Endothelial cell of umbilical vein (primary cell): ENCODE measurements at regions of chr2 and their contacts with region 1.

Region 1: GRCh38 chr2:62884514-62884913 is 166.1 kb upstream of the OTX1 start:
- DNase-seq: peak; percentile 59
- H3K4me3 ChIP-seq: no peak overlapping the region
- H3K27ac ChIP-seq: no peak overlapping the region
- H3K4me1 ChIP-seq: peaks cover 14% of the 10 kb centered on the region
- H3K27me3 ChIP-seq: no peaks in the 10 kb centered on the region
- CTCF ChIP-seq: no peak
- POLR2A ChIP-seq: peak; percentile 38

Region 2: DNA sequence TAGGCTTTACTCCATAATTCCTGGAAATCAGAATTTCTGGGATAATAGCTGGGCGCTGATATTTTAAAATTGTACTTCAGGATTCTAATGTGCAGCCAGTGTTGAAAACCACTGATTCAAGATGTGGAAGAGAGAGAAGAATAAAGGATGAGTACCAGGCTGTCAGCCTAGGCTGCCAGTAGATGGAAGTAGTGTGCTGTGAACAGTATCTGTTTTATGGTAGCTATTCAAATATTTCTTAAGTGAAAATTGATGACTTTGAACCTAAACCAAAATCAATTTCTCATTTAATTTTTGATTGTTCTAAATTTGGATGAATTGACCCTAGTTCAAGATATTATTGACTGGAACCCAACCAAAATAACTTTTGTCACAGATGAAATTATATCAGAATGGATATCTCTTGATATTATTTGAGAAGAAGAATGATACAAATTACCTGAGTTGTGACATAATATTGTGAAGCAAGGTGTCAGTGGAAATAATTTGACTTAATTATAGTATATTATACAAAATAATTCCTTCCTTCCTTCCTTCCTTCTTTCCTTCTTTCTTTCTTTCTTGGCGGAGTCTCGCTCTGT is 891.0 kb before region 1 on chr2:
- CTCF ChIA-PET with region 1: no interaction called
- POLR2A ChIA-PET with region 1: no interaction called
- dilution Hi-C with region 1: no loop called
- intact Hi-C with region 1: no loop called
- DNase-seq: peak; percentile 72
- H3K4me3 ChIP-seq: no peak overlapping the region
- H3K27ac ChIP-seq: no peak overlapping the region
- H3K4me1 ChIP-seq: no peaks in the 10 kb centered on the region
- H3K27me3 ChIP-seq: no peaks in the 10 kb centered on the region
- CTCF ChIP-seq: peak; percentile 50 to 59
- POLR2A ChIP-seq: no peak

Region 3: DNA sequence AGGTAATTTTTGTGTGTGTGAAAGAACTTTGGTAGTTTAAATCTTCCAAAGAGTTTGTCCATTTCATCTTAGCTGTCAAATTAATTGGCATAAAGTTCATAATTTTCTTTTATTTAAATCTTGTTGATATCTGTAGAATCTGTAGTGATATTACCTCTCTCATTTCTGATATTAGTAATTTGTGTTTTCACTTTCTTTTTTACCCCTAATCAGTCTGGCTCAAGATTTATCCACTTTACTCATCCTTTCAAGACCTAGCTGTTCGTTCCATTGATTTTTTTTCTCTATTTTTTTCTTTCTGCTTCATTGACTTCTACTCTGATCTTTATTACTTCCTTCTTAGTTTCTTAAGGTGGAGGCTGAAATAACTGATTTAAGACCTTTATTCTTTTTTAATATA is 23.6 kb after region 1 on chr2:
- CTCF ChIA-PET with region 1: no interaction called
- POLR2A ChIA-PET with region 1: no interaction called
- dilution Hi-C with region 1: no loop called
- intact Hi-C with region 1: no loop called
- DNase-seq: no peak
- H3K4me3 ChIP-seq: no peak overlapping the region
- H3K27ac ChIP-seq: no peak overlapping the region
- H3K4me1 ChIP-seq: no peaks in the 10 kb centered on the region
- H3K27me3 ChIP-seq: no peaks in the 10 kb centered on the region
- CTCF ChIP-seq: no peak
- POLR2A ChIP-seq: no peak

Region 4: GRCh38 chr2:62928015-62928414 is 43.5 kb after region 1 on chr2:
- CTCF ChIA-PET with region 1: no interaction called
- POLR2A ChIA-PET with region 1: no interaction called
- dilution Hi-C with region 1: no loop called
- intact Hi-C with region 1: loop called (anchors 2 kb)
- DNase-seq: no peak
- H3K4me3 ChIP-seq: no peak overlapping the region
- H3K27ac ChIP-seq: no peak overlapping the region
- H3K4me1 ChIP-seq: no peaks in the 10 kb centered on the region
- H3K27me3 ChIP-seq: no peaks in the 10 kb centered on the region
- CTCF ChIP-seq: no peak
- POLR2A ChIP-seq: no peak